ENCODE measurements at regions of chr17 and their contacts with region 1.

Region 1: GRCh38 chr17:2244545-2245525 is 58.8 kb downstream of the SMG6 start:
- DNase-seq: peak; percentile 70 to 85 (median 79)
- H3K4me3 ChIP-seq: no peak overlapping the region
- H3K27ac ChIP-seq: no peak overlapping the region
- H3K4me1 ChIP-seq: no peaks in the 10 kb centered on the region
- H3K27me3 ChIP-seq: no peaks in the 10 kb centered on the region

Region 2: GRCh38 chr17:2094891-2095535 is 149.8 kb before region 1 on chr17:
- CTCF ChIA-PET with region 1: interaction called, 35 read pairs
- POLR2A ChIA-PET with region 1: no interaction called
- DNase-seq: peak in 2 of 3 donors; percentile 47 to 48
- H3K4me3 ChIP-seq: no peak overlapping the region
- H3K27ac ChIP-seq: no peak overlapping the region
- H3K4me1 ChIP-seq: peaks cover 6 to 15% (median 8%) of the 10 kb centered on the region in 4 experiments
- H3K27me3 ChIP-seq: no peaks in the 10 kb centered on the region

Region 3: GRCh38 chr17:2157675-2158395 is 87.0 kb before region 1 on chr17:
- CTCF ChIA-PET with region 1: no interaction called
- POLR2A ChIA-PET with region 1: no interaction called
- DNase-seq: peak; percentile 57 to 85 (median 84)
- H3K4me3 ChIP-seq: no peak overlapping the region
- H3K27ac ChIP-seq: peak overlapping the region in 1 of 2 experiments; percentile 30
- H3K4me1 ChIP-seq: peaks cover 21 to 36% (median 27%) of the 10 kb centered on the region in 4 experiments
- H3K27me3 ChIP-seq: no peaks in the 10 kb centered on the region

Region 4: GRCh38 chr17:2233441-2233947 is 11.3 kb before region 1 on chr17:
- CTCF ChIA-PET with region 1: interaction called, 24 read pairs
- POLR2A ChIA-PET with region 1: no interaction called
- DNase-seq: no peak
- H3K4me3 ChIP-seq: no peak overlapping the region
- H3K27ac ChIP-seq: no peak overlapping the region
- H3K4me1 ChIP-seq: peaks cover 0 to 12% (median 0%) of the 10 kb centered on the region in 4 experiments
- H3K27me3 ChIP-seq: no peaks in the 10 kb centered on the region

Region 5: GRCh38 chr17:2259769-2260536 is 15.1 kb after region 1 on chr17:
- CTCF ChIA-PET with region 1: interaction called, 17 read pairs
- POLR2A ChIA-PET with region 1: no interaction called
- DNase-seq: peak in 2 of 3 donors; percentile 47 to 54
- H3K4me3 ChIP-seq: peak overlapping the region in 1 of 7 experiments; percentile 23
- H3K27ac ChIP-seq: peak overlapping the region in 1 of 2 experiments; percentile 12
- H3K4me1 ChIP-seq: peaks cover 0 to 22% (median 14%) of the 10 kb centered on the region in 4 experiments
- H3K27me3 ChIP-seq: no peaks in the 10 kb centered on the region

Region 6: DNA sequence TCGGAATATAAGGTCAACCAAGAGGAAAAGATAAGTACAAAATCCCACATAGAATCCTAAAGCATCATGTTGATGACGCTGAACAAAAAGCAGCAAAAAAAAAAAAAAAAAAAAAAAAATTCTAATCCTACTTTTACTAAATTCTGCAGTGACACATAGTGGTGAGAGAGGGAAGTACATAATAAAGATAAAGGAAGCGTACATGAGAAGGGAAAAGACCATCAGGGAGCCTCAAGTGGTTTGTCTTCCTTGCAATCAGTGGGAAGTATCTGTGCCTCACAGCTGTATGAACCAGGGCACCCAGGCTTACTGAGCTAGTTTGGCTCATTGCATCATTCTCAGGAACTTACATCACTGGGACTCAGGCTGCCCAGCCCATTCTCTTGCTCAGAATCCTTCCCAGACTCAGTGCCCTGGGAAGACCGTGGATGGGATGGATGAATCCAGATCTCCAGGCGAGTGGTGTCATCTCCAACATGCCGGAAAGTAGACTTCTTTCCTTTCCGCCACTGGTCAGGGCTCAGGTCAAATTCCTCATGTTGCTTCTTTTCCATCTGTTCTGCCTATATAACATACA is 37.5 kb after region 1 on chr17:
- CTCF ChIA-PET with region 1: interaction called, 11 read pairs
- POLR2A ChIA-PET with region 1: no interaction called
- DNase-seq: peak; percentile 68 to 84 (median 79)
- H3K4me3 ChIP-seq: no peak overlapping the region
- H3K27ac ChIP-seq: no peak overlapping the region
- H3K4me1 ChIP-seq: peaks cover 0 to 2% (median 0%) of the 10 kb centered on the region in 4 experiments
- H3K27me3 ChIP-seq: no peaks in the 10 kb centered on the region